ENCODE measurements at regions of chr10 and their contacts with region 1.

Region 1: GRCh38 chr10:18651324-18652007 is at the start of gene NSUN6:
- DNase-seq: peak; percentile 89
- H3K4me3 Mint-ChIP-seq: peak within 1 kb of the TSS; percentile 85
- H3K27ac Mint-ChIP-seq: peak within 1 kb of the TSS; percentile 92
- H3K4me1 Mint-ChIP-seq: peaks cover 8% of the 10 kb centered on the region
- H3K27me3 Mint-ChIP-seq: no peaks in the 10 kb centered on the region
- CTCF ChIP-seq: no peak
- total RNA-seq, gene NSUN6: 10.5 and 14.5 TPM in 2 replicates

Region 2: DNA sequence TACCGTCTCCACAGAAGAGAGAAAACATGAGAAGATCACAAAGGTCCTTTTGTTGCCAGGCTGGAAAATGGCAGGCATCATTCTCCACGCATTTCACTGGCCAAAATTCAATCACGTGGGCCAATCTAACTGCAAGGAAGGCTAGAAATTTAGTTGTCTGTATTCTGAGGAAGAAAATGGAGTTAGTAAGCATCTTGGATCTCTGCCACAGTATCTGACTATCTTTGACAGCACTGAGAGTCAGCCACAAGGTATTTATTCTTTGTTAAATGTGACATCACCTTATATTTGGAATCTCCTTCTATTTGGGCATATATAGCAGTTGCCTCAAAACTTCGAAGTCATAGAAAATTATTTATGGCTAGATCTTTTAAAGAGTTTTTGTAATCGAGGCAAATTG is 214.0 kb before region 1 on chr10:
- CTCF ChIA-PET with region 1: no interaction called
- intact Hi-C with region 1: no loop called
- DNase-seq: no peak
- H3K4me3 Mint-ChIP-seq: no peak overlapping the region
- H3K27ac Mint-ChIP-seq: no peak overlapping the region
- H3K4me1 Mint-ChIP-seq: no peaks in the 10 kb centered on the region
- H3K27me3 Mint-ChIP-seq: no peaks in the 10 kb centered on the region
- CTCF ChIP-seq: no peak

Region 3: GRCh38 chr10:18610517-18610916 is 40.9 kb before region 1 on chr10:
- CTCF ChIA-PET with region 1: no interaction called
- intact Hi-C with region 1: loop called (anchors 5 kb)
- DNase-seq: peak; percentile 37
- H3K4me3 Mint-ChIP-seq: peak overlapping the region; percentile 20
- H3K27ac Mint-ChIP-seq: peak overlapping the region; percentile 84
- H3K4me1 Mint-ChIP-seq: peaks cover 9% of the 10 kb centered on the region
- H3K27me3 Mint-ChIP-seq: no peaks in the 10 kb centered on the region
- CTCF ChIP-seq: no peak

Measured in Calu3 (cell line).